Heart right ventricle (tissue), 16 donors: ENCODE measurements at regions of chr3 and their contacts with region 1.

Region 1: DNA sequence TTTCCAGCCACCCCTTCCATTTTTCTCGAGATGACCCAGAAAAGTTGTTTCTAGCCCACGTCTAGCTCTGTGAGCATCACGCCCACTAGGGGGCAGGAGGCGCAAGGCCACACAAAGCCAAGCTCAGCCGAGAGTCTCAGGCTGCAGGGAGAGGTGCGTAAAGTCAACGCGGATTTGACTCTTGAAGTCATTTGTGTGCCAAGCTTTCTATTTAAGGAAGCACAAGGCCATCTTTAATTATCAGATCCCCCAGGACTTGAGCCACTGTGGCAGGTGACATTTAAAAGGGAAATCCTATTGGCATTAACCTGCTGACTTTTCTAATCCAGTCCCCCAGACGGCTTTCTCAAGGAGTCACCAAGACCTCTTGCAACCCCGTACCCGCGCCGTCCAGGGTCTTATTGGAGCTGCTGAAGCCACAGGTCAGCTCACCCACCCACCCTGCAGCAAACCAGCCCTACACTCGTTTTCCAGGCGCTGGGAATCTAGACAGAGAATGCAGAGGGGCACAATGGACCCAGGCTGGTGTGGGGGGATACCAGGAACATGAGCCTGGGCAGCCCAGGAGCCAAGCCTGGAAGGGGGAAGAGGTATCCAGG is 62.1 kb downstream of the CAPN7 start:
- DNase-seq: peak; percentile 84 to 85
- ATAC-seq: peak; percentile 74 to 88 (median 83)
- H3K4me3 ChIP-seq: no peak overlapping the region
- H3K27ac ChIP-seq: peak overlapping the region in 5 of 10 donors; percentile 4 to 92 (median 69)
- H3K4me1 ChIP-seq: peaks cover 0 to 58% (median 39%) of the 10 kb centered on the region in 9 donors
- H3K27me3 ChIP-seq: no peaks in the 10 kb centered on the region
- CTCF ChIP-seq: peak; percentile 91 to 97 (median 96)

Region 2: DNA sequence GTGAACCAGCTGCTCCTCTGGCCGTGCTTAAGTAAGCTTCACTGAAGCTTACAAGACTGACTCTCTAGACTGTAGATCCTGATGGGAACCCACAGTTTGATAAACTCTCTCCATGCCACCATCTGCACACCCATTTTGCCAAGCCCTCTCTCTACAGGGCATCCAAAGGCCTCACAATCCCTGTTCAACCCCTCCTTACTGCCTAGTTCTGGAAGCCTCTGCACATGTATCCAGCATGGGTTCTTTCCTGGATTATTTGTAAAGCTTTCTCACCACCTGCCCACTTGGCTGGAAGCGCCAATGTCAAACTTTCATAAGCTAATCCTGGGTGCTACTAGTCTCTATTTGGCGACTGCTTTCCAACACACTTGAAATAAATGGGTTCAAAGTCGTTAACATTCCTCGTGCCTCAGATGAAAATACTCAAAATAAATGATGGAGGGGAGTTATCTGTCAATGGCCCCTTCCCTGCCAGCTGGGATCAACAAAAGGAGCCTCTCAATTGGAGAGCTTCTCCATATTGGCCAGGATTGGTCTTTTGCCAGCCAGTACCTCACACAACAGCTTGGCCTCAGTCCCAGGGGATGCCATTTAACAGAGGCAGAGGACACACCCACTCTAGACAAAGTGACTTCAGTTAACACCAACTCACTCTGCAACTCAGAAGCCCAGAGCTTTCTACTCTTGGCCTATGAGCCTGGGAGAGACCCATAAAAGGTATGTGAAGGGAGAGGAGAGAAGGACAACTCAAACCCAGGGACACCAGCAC is 16.2 kb after region 1 on chr3:
- intact Hi-C with region 1: no loop called
- DNase-seq: peak in 1 of 2 donors; percentile 64
- ATAC-seq: peak in 7 of 8 donors; percentile 10 to 79 (median 52)
- H3K4me3 ChIP-seq: no peak overlapping the region
- H3K27ac ChIP-seq: no peak overlapping the region
- H3K4me1 ChIP-seq: peaks cover 10 to 48% (median 20%) of the 10 kb centered on the region in 9 donors
- H3K27me3 ChIP-seq: no peaks in the 10 kb centered on the region
- CTCF ChIP-seq: no peak

Region 3: GRCh38 chr3:15319575-15319974 is 51.4 kb after region 1 on chr3:
- intact Hi-C with region 1: loop called in 1 of 10 experiments (anchors 5 kb)
- DNase-seq: peak in 1 of 2 donors; percentile 39
- ATAC-seq: peak; percentile 48 to 80 (median 63)
- H3K4me3 ChIP-seq: no peak overlapping the region
- H3K27ac ChIP-seq: peak overlapping the region in 9 of 10 donors; percentile 18 to 74 (median 45)
- H3K4me1 ChIP-seq: peaks cover 8 to 87% (median 73%) of the 10 kb centered on the region in 9 donors
- H3K27me3 ChIP-seq: no peaks in the 10 kb centered on the region
- CTCF ChIP-seq: no peak

Region 4: GRCh38 chr3:15332405-15333098 is 64.4 kb after region 1 on chr3 and contains the start of gene SH3BP5:
- intact Hi-C with region 1: loop called (anchors 1 to 5 kb)
- DNase-seq: peak; percentile 69 to 76
- ATAC-seq: peak; percentile 86 to 93 (median 90)
- H3K4me3 ChIP-seq: peak within 1 kb of the TSS; percentile 68 to 98 (median 85)
- H3K27ac ChIP-seq: peak within 1 kb of the TSS in 9 of 10 donors; percentile 69 to 97 (median 87)
- H3K4me1 ChIP-seq: peaks cover 0 to 51% (median 43%) of the 10 kb centered on the region in 9 donors
- H3K27me3 ChIP-seq: no peaks in the 10 kb centered on the region
- CTCF ChIP-seq: peak; percentile 63 to 95 (median 81)
- total RNA-seq, gene SH3BP5: 6.7 to 22.4 (median 9.4) TPM

Region 5: GRCh38 chr3:15377961-15378791 is 110.0 kb after region 1 on chr3:
- intact Hi-C with region 1: loop called (anchors 1 to 5 kb)
- DNase-seq: peak; percentile 87 to 95
- ATAC-seq: peak; percentile 95 to 98 (median 98)
- H3K4me3 ChIP-seq: no peak overlapping the region
- H3K27ac ChIP-seq: peak overlapping the region in 9 of 10 donors; percentile 31 to 77 (median 61)
- H3K4me1 ChIP-seq: peaks cover 0 to 9% (median 4%) of the 10 kb centered on the region in 9 donors
- H3K27me3 ChIP-seq: no peaks in the 10 kb centered on the region
- CTCF ChIP-seq: peak; percentile 63 to 90 (median 87)

Region 6: GRCh38 chr3:15405448-15406050 is 137.4 kb after region 1 on chr3:
- intact Hi-C with region 1: loop called in 2 of 10 experiments (anchors 5 kb)
- DNase-seq: no peak
- ATAC-seq: peak in 5 of 8 donors; percentile 49 to 75 (median 60)
- H3K4me3 ChIP-seq: no peak overlapping the region
- H3K27ac ChIP-seq: no peak overlapping the region
- H3K4me1 ChIP-seq: peaks cover 0 to 36% (median 0%) of the 10 kb centered on the region in 9 donors
- H3K27me3 ChIP-seq: no peaks in the 10 kb centered on the region
- CTCF ChIP-seq: peak; percentile 31 to 77 (median 66)

Region 7: GRCh38 chr3:15557511-15557946 is 289.4 kb after region 1 on chr3:
- intact Hi-C with region 1: loop called in 5 of 10 experiments (anchors 5 to 10 kb)
- DNase-seq: peak in 1 of 2 donors; percentile 55
- ATAC-seq: peak; percentile 59 to 83 (median 75)
- H3K4me3 ChIP-seq: no peak overlapping the region
- H3K27ac ChIP-seq: peak overlapping the region in 1 of 10 donors; percentile 73
- H3K4me1 ChIP-seq: peaks cover 0 to 15% (median 0%) of the 10 kb centered on the region in 9 donors
- H3K27me3 ChIP-seq: no peaks in the 10 kb centered on the region
- CTCF ChIP-seq: peak; percentile 40 to 76 (median 68)

Region 8: GRCh38 chr3:16808393-16809107 is 1540.4 kb after region 1 on chr3:
- intact Hi-C with region 1: no loop called
- DNase-seq: no peak
- ATAC-seq: peak in 4 of 8 donors; percentile 44 to 65 (median 56)
- H3K4me3 ChIP-seq: no peak overlapping the region
- H3K27ac ChIP-seq: no peak overlapping the region
- H3K4me1 ChIP-seq: peaks cover 0 to 23% (median 8%) of the 10 kb centered on the region in 9 donors
- H3K27me3 ChIP-seq: no peaks in the 10 kb centered on the region
- CTCF ChIP-seq: peak in 1 of 9 donors; percentile 18